ENCODE measurements at regions of chr20 and their contacts with region 1.

Region 1: GRCh38 chr20:32779500-32780211 is 17.5 kb downstream of the DNMT3B start:
- DNase-seq: no peak
- H3K4me3 ChIP-seq: no peak overlapping the region
- H3K27ac ChIP-seq: no peak overlapping the region
- H3K4me1 ChIP-seq: no peaks in the 10 kb centered on the region
- H3K27me3 ChIP-seq: no peaks in the 10 kb centered on the region
- CTCF ChIP-seq: no peak

Region 2: DNA sequence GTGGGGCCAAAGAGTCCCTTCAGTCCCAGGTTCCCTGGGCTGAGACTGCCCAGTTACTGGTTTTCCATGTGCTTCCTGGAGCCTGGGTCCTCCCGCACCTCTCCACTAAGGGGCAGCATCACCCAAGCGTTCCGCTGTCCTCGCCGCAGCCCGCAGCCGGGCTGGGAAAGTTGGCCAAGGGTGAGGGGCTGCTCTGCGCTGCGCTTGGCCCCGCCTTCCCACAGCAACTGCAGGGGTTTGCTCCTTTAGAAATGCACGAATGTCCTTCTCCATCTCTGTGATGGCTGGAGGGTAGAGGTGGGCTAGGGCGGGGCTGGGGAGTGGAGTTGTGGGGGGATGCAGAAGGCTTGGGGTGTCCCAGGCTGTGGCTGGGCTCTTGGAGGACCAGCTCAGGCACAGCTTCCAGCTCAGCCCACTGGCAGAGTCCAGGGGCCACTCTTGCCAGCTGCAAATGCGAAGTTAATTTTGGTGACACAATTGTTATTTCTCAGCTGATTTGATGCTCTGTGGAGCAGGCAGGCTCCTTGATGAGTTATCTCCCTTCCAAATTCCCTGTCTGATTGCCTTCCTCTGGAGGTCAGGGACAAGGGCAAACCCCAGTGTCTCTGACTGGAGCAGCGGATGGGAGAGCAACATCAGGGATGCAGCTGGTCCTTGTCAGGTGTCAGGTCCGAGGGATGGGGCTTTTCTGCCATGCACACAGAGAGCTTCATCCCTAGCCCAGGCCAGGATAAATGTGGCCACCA is 257.7 kb before region 1 on chr20:
- intact Hi-C with region 1: loop called (anchors 10 kb)
- DNase-seq: peak; percentile 69
- H3K4me3 ChIP-seq: no peak overlapping the region
- H3K27ac ChIP-seq: no peak overlapping the region
- H3K4me1 ChIP-seq: no peaks in the 10 kb centered on the region
- H3K27me3 ChIP-seq: no peaks in the 10 kb centered on the region
- CTCF ChIP-seq: peak; percentile 76

Region 3: GRCh38 chr20:32674362-32674789 is 105.3 kb before region 1 on chr20:
- intact Hi-C with region 1: loop called (anchors 2 kb)
- DNase-seq: peak; percentile 66
- H3K4me3 ChIP-seq: no peak overlapping the region
- H3K27ac ChIP-seq: no peak overlapping the region
- H3K4me1 ChIP-seq: no peaks in the 10 kb centered on the region
- H3K27me3 ChIP-seq: no peaks in the 10 kb centered on the region
- CTCF ChIP-seq: peak; percentile 53

Region 4: DNA sequence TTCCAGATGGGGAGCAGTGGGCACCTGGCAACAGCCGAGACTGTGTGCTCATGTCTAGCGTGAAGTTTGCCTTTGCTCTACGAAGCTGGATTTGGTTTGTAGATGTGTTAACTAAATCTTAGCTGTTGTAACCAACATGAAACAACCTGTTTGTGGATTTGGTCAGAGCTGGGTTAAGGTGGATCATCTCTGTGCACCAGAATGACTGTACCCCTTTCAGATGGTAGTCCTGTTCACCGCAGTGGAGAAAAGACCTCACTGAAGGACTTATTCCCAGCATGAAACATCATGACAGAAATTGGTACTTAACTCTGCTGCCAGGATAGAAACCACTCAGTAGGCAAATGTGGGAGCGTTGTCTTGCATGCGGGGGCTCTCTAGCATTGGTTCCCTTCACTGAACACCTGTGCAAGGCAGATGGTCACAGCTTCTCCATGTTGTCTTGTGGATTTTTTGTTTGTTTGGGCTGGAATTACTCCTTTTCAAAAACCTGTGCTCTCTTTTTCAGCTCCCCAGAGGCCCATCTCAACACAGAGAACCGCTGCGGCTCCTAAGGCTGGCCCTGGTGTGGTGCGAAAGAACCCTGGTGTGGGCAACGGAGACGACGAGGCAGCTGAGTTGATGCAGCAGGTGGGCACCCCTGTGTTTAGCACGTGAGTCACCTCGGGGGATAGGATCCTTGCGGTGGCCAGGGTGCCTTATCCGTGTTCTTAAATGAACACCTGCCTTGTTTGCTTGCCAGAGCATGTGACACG is 59.7 kb after region 1 on chr20:
- intact Hi-C with region 1: no loop called
- DNase-seq: no peak
- H3K4me3 ChIP-seq: no peak overlapping the region
- H3K27ac ChIP-seq: no peak overlapping the region
- H3K4me1 ChIP-seq: no peaks in the 10 kb centered on the region
- H3K27me3 ChIP-seq: no peaks in the 10 kb centered on the region
- CTCF ChIP-seq: no peak